CD8-positive, alpha-beta T cell (primary cell): ENCODE measurements at regions of chr3 and their contacts with region 1.

Region 1: DNA sequence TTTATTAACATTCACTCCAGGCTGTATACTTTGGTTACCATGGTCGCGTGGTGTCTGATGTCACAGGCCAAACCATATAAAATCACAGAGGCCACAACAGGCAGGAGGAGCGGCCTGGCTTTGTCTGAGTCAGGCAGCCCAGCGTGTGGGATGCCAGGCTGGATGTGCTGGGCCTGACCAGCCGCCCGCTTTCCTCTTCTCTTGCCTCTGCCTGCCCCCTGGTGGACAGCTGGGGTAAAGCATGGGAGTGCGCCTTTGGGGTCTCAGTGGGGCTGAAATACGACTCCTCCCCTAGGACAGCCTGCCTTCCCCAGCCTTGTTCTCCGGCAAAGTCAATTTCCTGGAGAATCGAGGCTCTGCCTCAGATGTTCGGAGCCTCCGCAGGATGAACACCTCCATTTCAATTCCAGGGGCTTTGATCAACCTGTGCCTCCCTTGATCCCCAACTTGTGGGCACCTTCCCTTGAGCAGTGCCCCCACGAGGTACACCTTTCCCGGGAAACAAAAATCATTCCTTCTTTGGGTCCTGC is 78.2 kb downstream of the CCNL1 start:
- DNase-seq: peak; percentile 74 to 94 (median 89)
- ATAC-seq: peak; percentile 96
- H3K4me3 ChIP-seq: no peak overlapping the region
- H3K4me3 Mint-ChIP-seq: no peak overlapping the region
- H3K27ac ChIP-seq: peak overlapping the region in 1 of 2 experiments; percentile 17
- H3K27ac Mint-ChIP-seq: peak overlapping the region; percentile 74
- H3K4me1 ChIP-seq: peaks cover 9% of the 10 kb centered on the region
- H3K4me1 Mint-ChIP-seq: peaks cover 11% of the 10 kb centered on the region
- H3K27me3 ChIP-seq: no peaks in the 10 kb centered on the region
- H3K27me3 Mint-ChIP-seq: no peaks in the 10 kb centered on the region
- CTCF ChIP-seq: peak; percentile 90

Region 2: GRCh38 chr3:156040041-156040440 is 1041.7 kb before region 1 on chr3:
- CTCF ChIA-PET with region 1: interaction called, 4 read pairs
- POLR2A ChIA-PET with region 1: no interaction called
- intact Hi-C with region 1: loop called in 1 of 2 experiments (anchors 5 kb)
- DNase-seq: no peak
- ATAC-seq: no peak
- H3K4me3 ChIP-seq: no peak overlapping the region
- H3K4me3 Mint-ChIP-seq: no peak overlapping the region
- H3K27ac ChIP-seq: no peak overlapping the region
- H3K27ac Mint-ChIP-seq: no peak overlapping the region
- H3K4me1 ChIP-seq: no peaks in the 10 kb centered on the region
- H3K4me1 Mint-ChIP-seq: peaks cover 2% of the 10 kb centered on the region
- H3K27me3 ChIP-seq: no peaks in the 10 kb centered on the region
- H3K27me3 Mint-ChIP-seq: peaks cover 5% of the 10 kb centered on the region
- CTCF ChIP-seq: no peak

Region 3: GRCh38 chr3:156356537-156357363 is 725.0 kb before region 1 on chr3:
- CTCF ChIA-PET with region 1: no interaction called
- POLR2A ChIA-PET with region 1: no interaction called
- intact Hi-C with region 1: no loop called
- DNase-seq: no peak
- ATAC-seq: no peak
- H3K4me3 ChIP-seq: no peak overlapping the region
- H3K4me3 Mint-ChIP-seq: no peak overlapping the region
- H3K27ac ChIP-seq: no peak overlapping the region
- H3K27ac Mint-ChIP-seq: no peak overlapping the region
- H3K4me1 ChIP-seq: no peaks in the 10 kb centered on the region
- H3K4me1 Mint-ChIP-seq: no peaks in the 10 kb centered on the region
- H3K27me3 ChIP-seq: no peaks in the 10 kb centered on the region
- H3K27me3 Mint-ChIP-seq: peaks cover 3% of the 10 kb centered on the region
- CTCF ChIP-seq: no peak

Region 4: GRCh38 chr3:156509189-156510174 is 572.3 kb before region 1 on chr3:
- CTCF ChIA-PET with region 1: interaction called, 4 read pairs
- POLR2A ChIA-PET with region 1: no interaction called
- intact Hi-C with region 1: loop called in 1 of 2 experiments (anchors 1 kb)
- DNase-seq: peak in 2 of 9 experiments; percentile 61 to 72
- ATAC-seq: peak; percentile 86
- H3K4me3 ChIP-seq: no peak overlapping the region
- H3K4me3 Mint-ChIP-seq: no peak overlapping the region
- H3K27ac ChIP-seq: no peak overlapping the region
- H3K27ac Mint-ChIP-seq: no peak overlapping the region
- H3K4me1 ChIP-seq: no peaks in the 10 kb centered on the region
- H3K4me1 Mint-ChIP-seq: no peaks in the 10 kb centered on the region
- H3K27me3 ChIP-seq: no peaks in the 10 kb centered on the region
- H3K27me3 Mint-ChIP-seq: peaks cover 15% of the 10 kb centered on the region
- CTCF ChIP-seq: peak; percentile 69

Region 5: GRCh38 chr3:156542715-156543555 is 538.8 kb before region 1 on chr3:
- CTCF ChIA-PET with region 1: interaction called, 5 read pairs
- POLR2A ChIA-PET with region 1: no interaction called
- intact Hi-C with region 1: loop called in 1 of 2 experiments (anchors 5 kb)
- DNase-seq: no peak
- ATAC-seq: no peak
- H3K4me3 ChIP-seq: no peak overlapping the region
- H3K4me3 Mint-ChIP-seq: no peak overlapping the region
- H3K27ac ChIP-seq: no peak overlapping the region
- H3K27ac Mint-ChIP-seq: no peak overlapping the region
- H3K4me1 ChIP-seq: no peaks in the 10 kb centered on the region
- H3K4me1 Mint-ChIP-seq: peaks cover 15% of the 10 kb centered on the region
- H3K27me3 ChIP-seq: no peaks in the 10 kb centered on the region
- H3K27me3 Mint-ChIP-seq: no peaks in the 10 kb centered on the region
- CTCF ChIP-seq: no peak

Region 6: GRCh38 chr3:156816800-156817645 is 264.7 kb before region 1 on chr3:
- CTCF ChIA-PET with region 1: no interaction called
- POLR2A ChIA-PET with region 1: no interaction called
- intact Hi-C with region 1: loop called in 1 of 2 experiments (anchors 2 kb)
- DNase-seq: peak; percentile 53 to 95 (median 85)
- ATAC-seq: peak; percentile 80
- H3K4me3 ChIP-seq: peak overlapping the region; percentile 75 to 88
- H3K4me3 Mint-ChIP-seq: peak overlapping the region; percentile 95
- H3K27ac ChIP-seq: peak overlapping the region; percentile 73 to 78
- H3K27ac Mint-ChIP-seq: peak overlapping the region; percentile 95
- H3K4me1 ChIP-seq: peaks cover 18% of the 10 kb centered on the region
- H3K4me1 Mint-ChIP-seq: peaks cover 38% of the 10 kb centered on the region
- H3K27me3 ChIP-seq: no peaks in the 10 kb centered on the region
- H3K27me3 Mint-ChIP-seq: no peaks in the 10 kb centered on the region
- CTCF ChIP-seq: no peak

Region 7: GRCh38 chr3:157067114-157067513 is 14.6 kb before region 1 on chr3:
- CTCF ChIA-PET with region 1: interaction called, 11 read pairs
- POLR2A ChIA-PET with region 1: interaction called, 3 read pairs
- intact Hi-C with region 1: no loop called
- DNase-seq: peak in 5 of 9 experiments; percentile 36 to 81 (median 70)
- ATAC-seq: peak; percentile 89
- H3K4me3 ChIP-seq: no peak overlapping the region
- H3K4me3 Mint-ChIP-seq: no peak overlapping the region
- H3K27ac ChIP-seq: peak overlapping the region in 1 of 2 experiments; percentile 42
- H3K27ac Mint-ChIP-seq: peak overlapping the region; percentile 90
- H3K4me1 ChIP-seq: peaks cover 17% of the 10 kb centered on the region
- H3K4me1 Mint-ChIP-seq: peaks cover 38% of the 10 kb centered on the region
- H3K27me3 ChIP-seq: no peaks in the 10 kb centered on the region
- H3K27me3 Mint-ChIP-seq: no peaks in the 10 kb centered on the region
- CTCF ChIP-seq: no peak

Region 8: DNA sequence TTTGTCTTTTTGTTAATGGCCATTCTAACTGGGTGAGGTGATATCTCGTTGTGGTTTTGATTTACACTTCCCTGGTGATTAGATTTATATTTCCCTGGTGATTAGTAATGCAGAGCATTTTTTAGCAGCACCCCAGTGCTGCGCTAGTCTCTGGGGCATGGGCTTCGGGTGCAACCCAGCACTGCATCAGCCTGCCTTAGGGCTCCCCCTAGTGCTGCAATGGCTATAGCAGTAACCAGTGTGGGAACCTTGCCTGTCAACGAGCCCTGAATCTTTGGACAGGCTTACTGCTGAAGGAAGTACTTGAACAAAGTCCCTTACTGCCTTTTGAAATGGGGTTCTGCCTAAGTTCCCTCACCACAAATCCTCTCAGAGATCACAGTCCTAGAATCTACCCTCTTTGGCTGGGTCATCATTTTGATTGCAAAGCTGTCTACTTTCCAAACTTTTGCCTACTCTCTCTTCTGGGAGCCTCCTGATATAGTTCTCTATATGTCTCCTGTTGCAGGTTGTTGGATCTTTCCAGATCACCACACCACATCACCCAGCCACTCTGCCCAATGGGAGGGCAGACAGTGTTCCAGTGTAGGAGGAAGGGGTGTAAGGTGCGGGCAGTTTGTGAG is 157.4 kb after region 1 on chr3:
- CTCF ChIA-PET with region 1: no interaction called
- POLR2A ChIA-PET with region 1: no interaction called
- intact Hi-C with region 1: loop called in 1 of 2 experiments (anchors 5 kb)
- DNase-seq: peak; percentile 49 to 80 (median 72)
- ATAC-seq: peak; percentile 100
- H3K4me3 ChIP-seq: no peak overlapping the region
- H3K4me3 Mint-ChIP-seq: no peak overlapping the region
- H3K27ac ChIP-seq: no peak overlapping the region
- H3K27ac Mint-ChIP-seq: no peak overlapping the region
- H3K4me1 ChIP-seq: no peaks in the 10 kb centered on the region
- H3K4me1 Mint-ChIP-seq: peaks cover 4% of the 10 kb centered on the region
- H3K27me3 ChIP-seq: no peaks in the 10 kb centered on the region
- H3K27me3 Mint-ChIP-seq: no peaks in the 10 kb centered on the region
- CTCF ChIP-seq: peak; percentile 73

Region 9: GRCh38 chr3:157330206-157330605 is 248.5 kb after region 1 on chr3:
- CTCF ChIA-PET with region 1: no interaction called
- POLR2A ChIA-PET with region 1: no interaction called
- intact Hi-C with region 1: no loop called
- DNase-seq: no peak
- ATAC-seq: no peak
- H3K4me3 ChIP-seq: no peak overlapping the region
- H3K4me3 Mint-ChIP-seq: no peak overlapping the region
- H3K27ac ChIP-seq: no peak overlapping the region
- H3K27ac Mint-ChIP-seq: no peak overlapping the region
- H3K4me1 ChIP-seq: no peaks in the 10 kb centered on the region
- H3K4me1 Mint-ChIP-seq: peaks cover 2% of the 10 kb centered on the region
- H3K27me3 ChIP-seq: no peaks in the 10 kb centered on the region
- H3K27me3 Mint-ChIP-seq: no peaks in the 10 kb centered on the region
- CTCF ChIP-seq: no peak